Activated CD4-positive, alpha-beta memory T cell treated with anti-CD3 and anti-CD28 coated beads for 36 hours (primary cell): ENCODE measurements at regions of chr2 and their contacts with region 1.

Region 1: GRCh38 chr2:165874445-165875039 is 79.0 kb downstream of the TTC21B start:
- DNase-seq: no peak
- H3K4me3 Mint-ChIP-seq: no peak overlapping the region
- H3K27ac Mint-ChIP-seq: no peak overlapping the region
- H3K4me1 Mint-ChIP-seq: peaks cover 25% of the 10 kb centered on the region
- H3K27me3 Mint-ChIP-seq: no peaks in the 10 kb centered on the region

Region 2: GRCh38 chr2:165015052-165015642 is 859.4 kb before region 1 on chr2:
- CTCF ChIA-PET with region 1: interaction called, 6 read pairs
- POLR2A ChIA-PET with region 1: no interaction called
- intact Hi-C with region 1: loop called (anchors 10 kb)
- DNase-seq: peak; percentile 60
- H3K4me3 Mint-ChIP-seq: no peak overlapping the region
- H3K27ac Mint-ChIP-seq: no peak overlapping the region
- H3K4me1 Mint-ChIP-seq: no peaks in the 10 kb centered on the region
- H3K27me3 Mint-ChIP-seq: peaks cover 11% of the 10 kb centered on the region

Region 3: GRCh38 chr2:165401285-165401852 is 473.2 kb before region 1 on chr2:
- CTCF ChIA-PET with region 1: interaction called, 50 read pairs
- POLR2A ChIA-PET with region 1: no interaction called
- intact Hi-C with region 1: loop called (anchors 1 kb)
- DNase-seq: no peak
- H3K4me3 Mint-ChIP-seq: no peak overlapping the region
- H3K27ac Mint-ChIP-seq: no peak overlapping the region
- H3K4me1 Mint-ChIP-seq: no peaks in the 10 kb centered on the region
- H3K27me3 Mint-ChIP-seq: peaks cover 8% of the 10 kb centered on the region

Region 4: DNA sequence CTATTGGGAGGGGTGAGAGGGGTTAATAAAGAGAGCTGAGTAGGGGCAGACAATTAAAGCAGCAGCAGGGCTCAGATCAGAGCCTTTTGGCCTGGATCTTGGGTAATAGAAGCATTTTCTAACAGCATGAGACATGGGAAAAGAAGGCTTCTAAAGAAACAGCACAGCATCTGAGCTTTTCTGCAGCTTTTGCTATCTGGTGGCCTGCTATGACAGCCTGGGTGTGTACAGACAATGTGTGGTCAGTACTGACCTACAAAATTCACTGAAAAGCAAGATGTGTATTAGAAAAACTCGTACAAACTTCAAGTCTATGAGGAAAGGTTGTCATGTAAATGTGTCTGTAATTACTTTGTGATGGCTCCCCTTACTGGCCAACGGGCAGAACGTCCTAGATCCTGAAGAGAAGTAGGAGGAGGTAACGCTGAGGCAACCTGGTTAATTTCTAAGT is 176.1 kb before region 1 on chr2:
- CTCF ChIA-PET with region 1: no interaction called
- POLR2A ChIA-PET with region 1: no interaction called
- intact Hi-C with region 1: loop called (anchors 10 kb)
- DNase-seq: no peak
- H3K4me3 Mint-ChIP-seq: no peak overlapping the region
- H3K27ac Mint-ChIP-seq: no peak overlapping the region
- H3K4me1 Mint-ChIP-seq: no peaks in the 10 kb centered on the region
- H3K27me3 Mint-ChIP-seq: peaks cover 9% of the 10 kb centered on the region

Region 5: GRCh38 chr2:165920748-165921147 is 46.2 kb after region 1 on chr2:
- CTCF ChIA-PET with region 1: no interaction called
- POLR2A ChIA-PET with region 1: no interaction called
- intact Hi-C with region 1: loop called (anchors 2 kb)
- DNase-seq: no peak
- H3K4me3 Mint-ChIP-seq: no peak overlapping the region
- H3K27ac Mint-ChIP-seq: peak overlapping the region; percentile 74
- H3K4me1 Mint-ChIP-seq: peaks cover 7% of the 10 kb centered on the region
- H3K27me3 Mint-ChIP-seq: no peaks in the 10 kb centered on the region

Region 6: DNA sequence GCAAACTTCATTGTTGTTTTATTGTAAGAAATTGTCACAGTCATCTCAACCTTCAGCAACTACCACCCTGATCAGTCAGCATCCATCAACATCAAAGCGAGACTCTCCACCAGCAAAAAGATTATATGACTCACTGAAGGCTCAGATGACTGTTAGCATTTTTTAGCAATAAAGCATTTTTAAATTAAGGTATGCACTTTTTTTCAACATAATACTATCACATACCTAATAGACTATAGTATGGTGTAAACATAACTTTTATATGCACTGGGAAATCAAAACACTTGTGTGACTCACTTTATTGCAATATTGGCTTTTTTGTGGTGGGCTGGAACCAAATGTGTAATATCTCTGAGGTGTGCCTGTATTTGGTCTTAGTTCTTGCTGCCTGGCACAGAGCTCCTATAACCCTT is 237.7 kb after region 1 on chr2:
- CTCF ChIA-PET with region 1: no interaction called
- POLR2A ChIA-PET with region 1: no interaction called
- intact Hi-C with region 1: loop called (anchors 2 kb)
- DNase-seq: peak; percentile 13
- H3K4me3 Mint-ChIP-seq: no peak overlapping the region
- H3K27ac Mint-ChIP-seq: no peak overlapping the region
- H3K4me1 Mint-ChIP-seq: peaks cover 11% of the 10 kb centered on the region
- H3K27me3 Mint-ChIP-seq: no peaks in the 10 kb centered on the region